ENCODE measurements at regions of chr7 and their contacts with region 1.

Region 1: DNA sequence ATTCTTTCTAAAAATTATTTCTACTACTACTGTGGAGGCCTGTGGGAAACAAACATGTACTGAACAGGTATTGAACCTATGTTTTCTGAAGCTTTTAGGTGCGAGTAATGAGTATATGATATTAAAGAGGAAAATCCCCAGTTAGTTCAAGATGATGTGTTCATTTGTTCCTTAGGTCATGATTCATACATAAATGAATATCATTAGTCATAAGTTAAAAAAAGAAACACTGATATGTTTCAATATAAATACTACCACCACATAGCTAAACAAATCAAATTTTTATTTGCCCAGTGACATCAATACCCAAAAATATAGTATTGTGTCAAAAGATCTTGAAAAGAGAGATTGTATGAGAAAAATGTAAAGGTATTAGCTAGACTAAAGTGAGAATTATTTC is 210.7 kb upstream of the GNAI1 start:
- DNase-seq: peak; percentile 54
- ATAC-seq: peak; percentile 85
- H3K4me3 ChIP-seq: no peak overlapping the region
- H3K27ac ChIP-seq: peak overlapping the region; percentile 56
- H3K4me1 ChIP-seq: peaks cover 21% of the 10 kb centered on the region
- H3K27me3 ChIP-seq: no peaks in the 10 kb centered on the region
- CTCF ChIP-seq: no peak

Region 2: DNA sequence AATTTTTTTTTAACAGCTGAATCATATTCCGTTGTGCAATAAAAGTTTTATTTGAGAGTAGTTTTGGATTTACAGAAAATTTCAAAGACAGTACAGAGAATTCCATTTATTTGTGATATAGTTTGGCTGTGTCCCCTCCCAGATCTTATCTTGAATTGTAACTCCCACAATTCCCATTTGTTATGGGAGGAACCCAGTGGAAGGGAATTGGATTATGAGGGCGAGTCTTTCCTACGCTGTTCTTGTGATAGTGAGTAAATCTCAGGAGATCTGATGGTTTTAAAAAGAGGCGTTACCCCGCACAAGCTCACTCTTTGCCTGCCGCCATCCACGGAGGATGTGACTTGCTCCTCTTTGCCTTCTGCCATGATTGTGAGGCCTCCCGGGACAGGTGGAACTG is 242.5 kb before region 1 on chr7:
- CTCF ChIA-PET with region 1: no interaction called
- POLR2A ChIA-PET with region 1: no interaction called
- intact Hi-C with region 1: no loop called
- DNase-seq: no peak
- ATAC-seq: no peak
- H3K4me3 ChIP-seq: no peak overlapping the region
- H3K27ac ChIP-seq: no peak overlapping the region
- H3K4me1 ChIP-seq: no peaks in the 10 kb centered on the region
- H3K27me3 ChIP-seq: no peaks in the 10 kb centered on the region
- CTCF ChIP-seq: no peak

Region 3: GRCh38 chr7:79876848-79877252 is 47.1 kb before region 1 on chr7:
- CTCF ChIA-PET with region 1: no interaction called
- POLR2A ChIA-PET with region 1: no interaction called
- intact Hi-C with region 1: loop called (anchors 2 kb)
- DNase-seq: peak; percentile 91
- ATAC-seq: peak; percentile 98
- H3K4me3 ChIP-seq: no peak overlapping the region
- H3K27ac ChIP-seq: 0 out of 2 replicates have a peak overlapping the region, but pooled peaks have one; percentile 10
- H3K4me1 ChIP-seq: peaks cover 6% of the 10 kb centered on the region; the same call in 1 of the 2 replicates
- H3K27me3 ChIP-seq: no peaks in the 10 kb centered on the region
- CTCF ChIP-seq: no peak

Measured in PC-3 (cell line).